ENCODE measurements at regions of chr15 and their contacts with region 1.

Region 1: DNA sequence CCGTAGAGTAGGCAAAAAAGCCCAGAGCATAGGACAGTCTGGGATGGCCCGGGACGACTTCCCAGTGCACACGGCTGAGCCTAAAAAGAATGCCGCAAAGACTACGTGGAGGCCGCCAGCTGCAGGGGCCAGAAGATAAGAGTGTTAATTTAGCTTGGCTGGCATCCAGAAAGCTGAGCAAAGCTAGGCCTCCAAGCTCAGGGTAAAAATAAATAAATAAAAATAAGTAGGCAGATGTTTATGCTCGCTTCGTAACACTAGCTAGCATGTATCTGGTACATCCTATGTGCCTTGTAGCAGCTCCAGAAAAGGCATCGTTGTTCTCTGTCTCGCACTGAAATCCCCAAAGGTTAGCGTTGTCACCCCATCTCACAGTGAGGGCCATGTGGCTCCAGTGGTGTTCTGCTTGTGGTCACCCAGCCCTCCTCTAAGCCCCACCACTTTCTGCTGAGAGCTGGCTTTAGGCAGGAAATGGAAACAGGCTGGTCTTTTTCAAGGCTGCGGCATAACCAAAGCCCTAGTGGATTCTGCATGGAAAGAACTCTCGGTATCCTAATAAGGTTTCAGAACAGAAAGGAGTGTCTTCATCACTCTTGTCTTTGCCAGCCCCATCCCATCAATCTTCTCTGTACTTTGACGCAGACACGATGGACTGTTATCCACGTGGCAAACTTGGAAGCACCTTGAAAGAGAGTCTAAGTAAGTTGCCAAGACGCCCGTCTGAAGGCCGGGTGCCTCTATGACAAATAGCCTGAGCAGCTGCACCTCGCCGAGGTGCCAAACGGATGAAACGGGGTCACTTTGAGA is 58.1 kb upstream of the MEF2A start:
- DNase-seq: peak; percentile 91

Region 2: GRCh38 chr15:99452774-99453636 is 54.7 kb before region 1 on chr15:
- intact Hi-C with region 1: loop called in 1 of 2 experiments (anchors 10 kb)
- DNase-seq: peak; percentile 96

Region 3: GRCh38 chr15:99631255-99631654 is 123.5 kb after region 1 on chr15:
- intact Hi-C with region 1: no loop called
- DNase-seq: no peak